IMR-90 (cell line): ENCODE measurements at regions of chr3 and their contacts with region 1.

Region 1: DNA sequence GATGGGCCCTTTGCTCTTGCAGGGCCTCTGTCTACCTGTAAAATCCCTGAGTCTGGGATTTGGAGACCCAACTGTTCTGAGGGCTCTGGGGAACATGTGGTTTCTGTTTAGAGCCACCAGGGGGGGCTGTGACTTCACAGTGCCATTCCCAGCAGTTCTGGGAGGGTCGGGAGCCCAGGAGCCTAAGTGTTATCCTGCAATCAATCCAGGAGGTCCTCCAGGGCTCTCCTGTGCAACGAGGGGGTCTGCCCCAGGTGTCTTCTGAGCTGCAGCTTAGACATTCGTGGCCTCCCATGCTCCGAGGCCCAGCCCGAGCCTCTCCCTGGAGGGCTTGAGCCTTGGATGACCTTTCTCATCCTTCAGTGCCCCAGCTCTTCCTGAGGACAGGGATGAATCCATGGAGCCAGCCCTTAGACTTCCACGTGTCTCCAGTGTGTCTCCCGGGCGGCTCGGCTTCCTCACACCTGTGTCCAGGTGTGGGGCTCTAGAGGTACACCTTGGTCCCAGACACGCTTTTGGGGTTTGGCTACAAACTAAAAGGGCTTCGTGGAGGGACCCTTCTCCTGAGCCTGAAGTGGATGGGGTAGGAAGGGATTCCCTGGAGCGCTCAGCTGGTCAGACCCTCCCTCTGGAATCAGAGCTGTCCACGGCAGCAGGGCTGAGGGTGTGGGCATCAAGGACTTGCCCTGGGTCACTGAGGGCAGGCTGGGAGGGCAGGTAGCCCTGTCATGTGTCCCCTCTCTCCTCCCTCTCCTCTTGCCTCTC is 20.3 kb upstream of the ABTB1 start:
- DNase-seq: peak; percentile 50
- ATAC-seq: peak; percentile 92
- H3K4me3 ChIP-seq: no peak overlapping the region
- H3K27ac ChIP-seq: no peak overlapping the region
- H3K4me1 ChIP-seq: peaks cover 6% of the 10 kb centered on the region
- H3K27me3 ChIP-seq: peaks cover 9% of the 10 kb centered on the region
- CTCF ChIP-seq: peak; percentile 91
- POLR2A ChIP-seq: 0 out of 2 replicates have a peak, but pooled peaks have one; percentile 36
- RAD21 ChIP-seq: peak; percentile 96

Region 2: GRCh38 chr3:127182471-127183367 is 469.7 kb before region 1 on chr3:
- CTCF ChIA-PET with region 1: no interaction called
- POLR2A ChIA-PET with region 1: no interaction called
- dilution Hi-C with region 1: no loop called
- in situ Hi-C with region 1: no loop called
- intact Hi-C with region 1: no loop called
- DNase-seq: no peak
- ATAC-seq: no peak
- H3K4me3 ChIP-seq: no peak overlapping the region
- H3K27ac ChIP-seq: no peak overlapping the region
- H3K4me1 ChIP-seq: no peaks in the 10 kb centered on the region
- H3K27me3 ChIP-seq: peaks cover 2% of the 10 kb centered on the region
- CTCF ChIP-seq: no peak
- POLR2A ChIP-seq: no peak
- RAD21 ChIP-seq: no peak

Region 3: GRCh38 chr3:127304121-127304744 is 348.2 kb before region 1 on chr3:
- CTCF ChIA-PET with region 1: no interaction called
- POLR2A ChIA-PET with region 1: no interaction called
- dilution Hi-C with region 1: no loop called
- in situ Hi-C with region 1: no loop called
- intact Hi-C with region 1: no loop called
- DNase-seq: no peak
- ATAC-seq: no peak
- H3K4me3 ChIP-seq: no peak overlapping the region
- H3K27ac ChIP-seq: no peak overlapping the region
- H3K4me1 ChIP-seq: no peaks in the 10 kb centered on the region
- H3K27me3 ChIP-seq: peaks cover 11% of the 10 kb centered on the region
- CTCF ChIP-seq: no peak
- POLR2A ChIP-seq: no peak
- RAD21 ChIP-seq: no peak

Region 4: DNA sequence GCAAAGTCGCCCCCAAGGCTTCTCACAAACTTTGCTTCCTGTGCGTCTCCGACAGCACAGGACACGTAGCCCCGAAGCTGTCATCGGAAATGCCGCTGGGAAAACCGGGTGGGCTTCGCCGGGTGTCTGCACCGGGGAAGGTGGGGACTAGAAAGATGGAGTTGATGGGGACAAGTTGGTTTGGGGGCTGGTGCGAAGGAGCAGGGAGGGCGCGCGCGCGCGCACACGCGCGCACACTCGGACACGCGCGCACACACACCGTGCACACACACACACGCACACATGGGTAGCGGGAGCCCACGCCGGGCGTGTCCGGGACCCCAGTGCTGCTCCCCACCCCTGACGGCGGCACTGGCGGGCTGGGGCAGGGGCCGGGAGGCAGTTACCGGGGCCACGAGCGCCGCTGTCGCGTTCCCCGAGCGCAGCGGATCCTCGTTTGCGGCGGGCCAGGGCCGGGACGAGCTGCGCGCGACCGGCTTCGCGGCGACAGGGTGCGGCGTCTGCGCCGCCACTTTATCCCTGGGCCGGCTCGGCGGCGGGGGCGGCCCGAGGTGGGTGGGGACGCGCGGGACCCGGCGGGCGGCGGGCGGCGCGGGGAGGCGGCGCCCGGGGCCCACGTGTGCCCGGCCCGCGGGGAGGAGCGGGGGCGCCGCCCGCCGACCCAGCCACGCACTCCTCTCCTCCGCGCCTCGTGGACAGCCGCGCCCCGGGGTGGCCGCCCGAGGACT is 170.4 kb after region 1 on chr3:
- CTCF ChIA-PET with region 1: no interaction called
- POLR2A ChIA-PET with region 1: no interaction called
- dilution Hi-C with region 1: no loop called
- in situ Hi-C with region 1: no loop called
- intact Hi-C with region 1: loop called (anchors 1 kb)
- DNase-seq: peak; percentile 33
- ATAC-seq: peak; percentile 71
- H3K4me3 ChIP-seq: peak overlapping the region; percentile 95
- H3K27ac ChIP-seq: peak overlapping the region; percentile 80
- H3K4me1 ChIP-seq: peaks cover 16% of the 10 kb centered on the region
- H3K27me3 ChIP-seq: no peaks in the 10 kb centered on the region
- CTCF ChIP-seq: peak; percentile 37
- POLR2A ChIP-seq: no peak
- RAD21 ChIP-seq: peak; percentile 34; the same call in 1 of the 2 replicates

Region 5: DNA sequence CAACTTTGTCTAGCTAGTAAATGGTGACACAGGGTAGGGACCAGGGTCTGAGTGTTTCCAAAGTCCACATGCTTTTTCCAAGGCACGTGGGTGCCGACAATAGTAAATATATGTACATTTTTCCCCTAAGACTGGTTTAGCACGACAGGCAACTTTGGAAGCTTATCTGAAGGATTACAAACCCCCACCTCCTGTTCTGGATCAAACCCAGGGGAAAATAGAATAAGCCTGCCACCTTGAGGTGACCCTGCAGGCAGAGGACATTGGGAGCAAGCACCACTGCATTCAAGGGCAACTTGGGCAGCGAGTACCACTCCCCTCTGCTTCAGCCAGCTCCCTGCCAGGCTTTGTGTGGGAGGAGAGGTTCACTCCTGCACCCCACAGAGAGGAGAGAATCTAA is 307.4 kb after region 1 on chr3:
- CTCF ChIA-PET with region 1: interaction called, 5 read pairs
- POLR2A ChIA-PET with region 1: no interaction called
- dilution Hi-C with region 1: no loop called
- in situ Hi-C with region 1: loop called (anchors 10 kb)
- intact Hi-C with region 1: no loop called
- DNase-seq: peak; percentile 4
- ATAC-seq: 0 out of 2 replicates have a peak, but pooled peaks have one; percentile 24
- H3K4me3 ChIP-seq: no peak overlapping the region
- H3K27ac ChIP-seq: no peak overlapping the region
- H3K4me1 ChIP-seq: no peaks in the 10 kb centered on the region
- H3K27me3 ChIP-seq: peaks cover 31% of the 10 kb centered on the region
- CTCF ChIP-seq: peak; percentile 30; the same call in 1 of the 2 replicates
- POLR2A ChIP-seq: no peak
- RAD21 ChIP-seq: peak; percentile 47

Region 6: GRCh38 chr3:128051837-128052594 is 399.6 kb after region 1 on chr3 and contains the start of gene SEC61A1:
- CTCF ChIA-PET with region 1: no interaction called
- POLR2A ChIA-PET with region 1: no interaction called
- dilution Hi-C with region 1: no loop called
- in situ Hi-C with region 1: no loop called
- intact Hi-C with region 1: loop called (anchors 2 kb)
- DNase-seq: peak; percentile 92
- ATAC-seq: peak; percentile 95
- H3K4me3 ChIP-seq: peak within 1 kb of the TSS; percentile 94
- H3K27ac ChIP-seq: peak within 1 kb of the TSS; percentile 95
- H3K4me1 ChIP-seq: peaks cover 7% of the 10 kb centered on the region
- H3K27me3 ChIP-seq: peaks cover 2% of the 10 kb centered on the region
- CTCF ChIP-seq: no peak
- POLR2A ChIP-seq: peak; percentile 98
- RAD21 ChIP-seq: no peak
- total RNA-seq, gene SEC61A1: 478 and 487 TPM in 2 replicates